PC-3 (cell line): ENCODE measurements at regions of chr2 and their contacts with region 1.

Region 1: GRCh38 chr2:67840460-67841068 is 222.2 kb downstream of the C1D start:
- DNase-seq: peak; percentile 84
- ATAC-seq: peak; percentile 99
- H3K4me3 ChIP-seq: no peak overlapping the region
- H3K27ac ChIP-seq: no peak overlapping the region
- H3K4me1 ChIP-seq: peaks cover 9% of the 10 kb centered on the region
- H3K27me3 ChIP-seq: no peaks in the 10 kb centered on the region
- CTCF ChIP-seq: peak; percentile 97

Region 2: GRCh38 chr2:67234439-67234838 is 606.1 kb before region 1 on chr2:
- CTCF ChIA-PET with region 1: no interaction called
- POLR2A ChIA-PET with region 1: no interaction called
- intact Hi-C with region 1: loop called (anchors 10 kb)
- DNase-seq: peak; percentile 51
- ATAC-seq: peak; percentile 56; the same call in 1 of the 2 replicates
- H3K4me3 ChIP-seq: no peak overlapping the region
- H3K27ac ChIP-seq: no peak overlapping the region
- H3K4me1 ChIP-seq: no peaks in the 10 kb centered on the region
- H3K27me3 ChIP-seq: no peaks in the 10 kb centered on the region
- CTCF ChIP-seq: peak; percentile 62

Region 3: GRCh38 chr2:67322353-67323001 is 518.1 kb before region 1 on chr2:
- CTCF ChIA-PET with region 1: no interaction called
- POLR2A ChIA-PET with region 1: no interaction called
- intact Hi-C with region 1: loop called (anchors 2 kb)
- DNase-seq: peak; percentile 79
- ATAC-seq: peak; percentile 93
- H3K4me3 ChIP-seq: no peak overlapping the region
- H3K27ac ChIP-seq: peak overlapping the region; percentile 44
- H3K4me1 ChIP-seq: no peaks in the 10 kb centered on the region; the same call in 1 of the 2 replicates
- H3K27me3 ChIP-seq: no peaks in the 10 kb centered on the region
- CTCF ChIP-seq: peak; percentile 88

Region 4: GRCh38 chr2:67650291-67651133 is 190.1 kb before region 1 on chr2:
- CTCF ChIA-PET with region 1: no interaction called
- POLR2A ChIA-PET with region 1: no interaction called
- intact Hi-C with region 1: loop called (anchors 5 kb)
- DNase-seq: peak; percentile 85
- ATAC-seq: peak; percentile 100
- H3K4me3 ChIP-seq: no peak overlapping the region
- H3K27ac ChIP-seq: 0 out of 2 replicates have a peak overlapping the region, but pooled peaks have one; percentile 19
- H3K4me1 ChIP-seq: peaks cover 6% of the 10 kb centered on the region
- H3K27me3 ChIP-seq: no peaks in the 10 kb centered on the region
- CTCF ChIP-seq: peak; percentile 90

Region 5: GRCh38 chr2:67721516-67721915 is 119.0 kb before region 1 on chr2:
- CTCF ChIA-PET with region 1: no interaction called
- POLR2A ChIA-PET with region 1: no interaction called
- intact Hi-C with region 1: no loop called
- DNase-seq: no peak
- ATAC-seq: no peak
- H3K4me3 ChIP-seq: no peak overlapping the region
- H3K27ac ChIP-seq: no peak overlapping the region
- H3K4me1 ChIP-seq: peaks cover 8% of the 10 kb centered on the region; the same call in 1 of the 2 replicates
- H3K27me3 ChIP-seq: no peaks in the 10 kb centered on the region
- CTCF ChIP-seq: no peak

Region 6: GRCh38 chr2:67733517-67733916 is 107.0 kb before region 1 on chr2:
- CTCF ChIA-PET with region 1: interaction called, 5 read pairs
- POLR2A ChIA-PET with region 1: no interaction called
- intact Hi-C with region 1: loop called (anchors 1 kb)
- DNase-seq: peak; percentile 62
- ATAC-seq: peak; percentile 98
- H3K4me3 ChIP-seq: no peak overlapping the region
- H3K27ac ChIP-seq: no peak overlapping the region
- H3K4me1 ChIP-seq: no peaks in the 10 kb centered on the region
- H3K27me3 ChIP-seq: no peaks in the 10 kb centered on the region; the same call in 1 of the 2 replicates
- CTCF ChIP-seq: peak; percentile 74

Region 7: GRCh38 chr2:67854798-67855197 is 14.2 kb after region 1 on chr2:
- CTCF ChIA-PET with region 1: no interaction called
- POLR2A ChIA-PET with region 1: no interaction called
- intact Hi-C with region 1: no loop called
- DNase-seq: no peak
- ATAC-seq: no peak
- H3K4me3 ChIP-seq: no peak overlapping the region
- H3K27ac ChIP-seq: no peak overlapping the region
- H3K4me1 ChIP-seq: no peaks in the 10 kb centered on the region
- H3K27me3 ChIP-seq: no peaks in the 10 kb centered on the region
- CTCF ChIP-seq: peak; percentile 42; the same call in 1 of the 2 replicates

Region 8: GRCh38 chr2:67898595-67898994 is 58.0 kb after region 1 on chr2:
- CTCF ChIA-PET with region 1: no interaction called
- POLR2A ChIA-PET with region 1: no interaction called
- intact Hi-C with region 1: no loop called
- DNase-seq: no peak
- ATAC-seq: no peak
- H3K4me3 ChIP-seq: no peak overlapping the region
- H3K27ac ChIP-seq: no peak overlapping the region
- H3K4me1 ChIP-seq: no peaks in the 10 kb centered on the region
- H3K27me3 ChIP-seq: no peaks in the 10 kb centered on the region
- CTCF ChIP-seq: no peak